Sigmoid colon (tissue), 7 donors: ENCODE measurements at regions of chr10 and their contacts with region 1.

Region 1: GRCh38 chr10:78302989-78303854 is 269.6 kb downstream of the RPS24 start:
- DNase-seq: peak; percentile 95
- H3K4me3 ChIP-seq: peak overlapping the region; percentile 35 to 62 (median 52)
- H3K27ac ChIP-seq: peak overlapping the region; percentile 85 to 91 (median 88)
- H3K4me1 ChIP-seq: peaks cover 0 to 54% (median 37%) of the 10 kb centered on the region in 4 donors
- H3K27me3 ChIP-seq: no peaks in the 10 kb centered on the region
- CTCF ChIP-seq: peak; percentile 65 to 80 (median 71)
- EP300 ChIP-seq: peak in 1 of 4 donors; percentile 28
- POLR2A ChIP-seq: peak; percentile 32 to 41

Region 2: GRCh38 chr10:77667426-77668324 is 635.5 kb before region 1 on chr10:
- intact Hi-C with region 1: no loop called
- DNase-seq: no peak
- H3K4me3 ChIP-seq: no peak overlapping the region
- H3K27ac ChIP-seq: no peak overlapping the region
- H3K4me1 ChIP-seq: no peaks in the 10 kb centered on the region
- H3K27me3 ChIP-seq: peaks cover 0 to 4% (median 0%) of the 10 kb centered on the region in 3 donors
- CTCF ChIP-seq: no peak
- EP300 ChIP-seq: no peak
- POLR2A ChIP-seq: no peak

Region 3: DNA sequence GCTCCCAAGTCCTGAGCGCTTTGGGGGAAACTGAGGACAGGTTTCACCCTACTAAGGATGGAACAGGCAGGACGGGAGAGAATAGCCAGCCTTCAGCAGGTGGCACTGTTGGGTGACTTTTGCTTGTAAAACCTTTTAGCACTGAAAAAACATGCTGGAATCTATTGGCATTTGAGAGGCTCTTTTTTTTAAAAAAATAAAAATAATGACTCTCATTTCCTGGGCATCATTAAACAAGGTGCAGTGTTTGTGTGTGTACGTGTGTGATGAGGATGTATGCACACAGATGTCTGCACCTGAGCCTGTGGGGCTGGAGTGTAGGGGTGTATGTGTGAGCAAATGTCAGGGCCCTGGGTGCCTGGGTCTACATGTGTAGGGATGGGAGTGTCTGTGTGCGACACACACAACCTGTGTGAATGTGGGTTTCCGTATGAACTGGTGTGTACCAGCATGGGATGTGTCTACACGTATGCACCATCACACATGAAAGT is 91.6 kb before region 1 on chr10:
- intact Hi-C with region 1: loop called (anchors 2 kb)
- DNase-seq: no peak
- H3K4me3 ChIP-seq: no peak overlapping the region
- H3K27ac ChIP-seq: peak overlapping the region; percentile 41 to 64 (median 44)
- H3K4me1 ChIP-seq: peaks cover 0 to 39% (median 33%) of the 10 kb centered on the region in 4 donors
- H3K27me3 ChIP-seq: no peaks in the 10 kb centered on the region
- CTCF ChIP-seq: peak in 3 of 4 experiments; percentile 37 to 53 (median 50)
- EP300 ChIP-seq: no peak
- POLR2A ChIP-seq: no peak

Region 4: GRCh38 chr10:78657163-78657861 is 354.1 kb after region 1 on chr10:
- intact Hi-C with region 1: loop called (anchors 1 kb)
- DNase-seq: peak; percentile 91
- H3K4me3 ChIP-seq: no peak overlapping the region
- H3K27ac ChIP-seq: peak overlapping the region in 3 of 4 donors; percentile 61 to 73 (median 70)
- H3K4me1 ChIP-seq: peaks cover 0 to 39% (median 18%) of the 10 kb centered on the region in 4 donors
- H3K27me3 ChIP-seq: no peaks in the 10 kb centered on the region
- CTCF ChIP-seq: peak; percentile 46 to 74 (median 60)
- EP300 ChIP-seq: no peak
- POLR2A ChIP-seq: no peak

Region 5: DNA sequence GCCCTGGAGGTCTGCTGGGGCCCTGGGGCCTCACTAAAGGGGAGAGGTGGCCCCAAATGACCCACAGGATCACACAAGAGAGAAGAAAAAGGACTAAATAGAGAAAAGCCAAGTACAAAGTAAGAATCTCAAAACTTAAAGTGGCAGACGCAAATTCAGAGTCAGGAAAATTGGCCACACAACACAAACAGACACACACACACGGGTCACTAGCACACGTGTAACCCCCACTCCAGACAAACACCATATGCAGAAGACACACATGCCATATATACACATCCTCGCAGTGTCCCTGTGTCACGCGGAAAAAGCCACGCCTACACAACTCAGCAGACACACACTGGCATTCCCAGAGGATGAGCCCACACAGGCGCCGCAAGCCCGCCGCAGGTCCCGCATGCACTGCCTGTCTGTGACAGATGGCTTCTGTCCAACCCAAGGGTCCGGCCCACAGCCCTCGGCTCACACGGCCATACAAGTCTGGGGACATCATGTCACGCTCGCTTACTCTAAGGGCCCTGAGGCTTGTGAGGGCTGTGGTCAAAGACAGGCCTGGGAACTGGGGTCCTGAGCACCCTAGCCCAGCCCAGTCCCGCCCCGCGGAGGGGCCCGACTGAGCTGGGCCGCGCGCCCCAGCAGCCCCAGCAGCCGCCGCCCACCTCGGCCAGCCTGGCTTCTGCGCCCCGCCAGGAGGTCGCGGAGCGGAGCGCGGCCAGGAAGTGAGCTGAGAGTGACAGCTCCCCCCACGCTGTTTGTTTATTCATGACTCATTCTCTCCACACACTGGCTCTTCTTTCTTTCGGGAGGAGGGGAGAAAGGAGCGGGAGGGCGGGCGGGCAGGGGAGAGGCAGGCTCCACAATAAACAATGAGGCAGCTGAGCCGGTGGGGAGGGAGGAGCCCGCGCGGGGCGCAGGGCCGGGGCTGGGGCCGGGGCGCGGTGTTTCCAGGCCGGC is 670.0 kb after region 1 on chr10:
- intact Hi-C with region 1: loop called (anchors 5 kb)
- DNase-seq: peak; percentile 91
- H3K4me3 ChIP-seq: peak overlapping the region; percentile 30 to 57 (median 49)
- H3K27ac ChIP-seq: peak overlapping the region; percentile 94 to 99 (median 96)
- H3K4me1 ChIP-seq: peaks cover 0 to 61% (median 51%) of the 10 kb centered on the region in 4 donors
- H3K27me3 ChIP-seq: no peaks in the 10 kb centered on the region
- CTCF ChIP-seq: peak in 1 of 4 experiments; percentile 10
- EP300 ChIP-seq: peak; percentile 5 to 86 (median 68)
- POLR2A ChIP-seq: peak in 1 of 2 donors; percentile 14